ENCODE measurements at regions of chr17 and their contacts with region 1.

Region 1: GRCh38 chr17:48047741-48048383 is at the start of gene NFE2L1:
- DNase-seq: peak; percentile 99
- H3K4me3 ChIP-seq: peak within 1 kb of the TSS; percentile 78
- H3K27ac ChIP-seq: peak within 1 kb of the TSS; percentile 66
- H3K4me1 ChIP-seq: peaks cover 60% of the 10 kb centered on the region
- CTCF ChIP-seq: no peak
- total RNA-seq, gene NFE2L1: 42.3 and 60.1 TPM in 2 replicates

Region 2: DNA sequence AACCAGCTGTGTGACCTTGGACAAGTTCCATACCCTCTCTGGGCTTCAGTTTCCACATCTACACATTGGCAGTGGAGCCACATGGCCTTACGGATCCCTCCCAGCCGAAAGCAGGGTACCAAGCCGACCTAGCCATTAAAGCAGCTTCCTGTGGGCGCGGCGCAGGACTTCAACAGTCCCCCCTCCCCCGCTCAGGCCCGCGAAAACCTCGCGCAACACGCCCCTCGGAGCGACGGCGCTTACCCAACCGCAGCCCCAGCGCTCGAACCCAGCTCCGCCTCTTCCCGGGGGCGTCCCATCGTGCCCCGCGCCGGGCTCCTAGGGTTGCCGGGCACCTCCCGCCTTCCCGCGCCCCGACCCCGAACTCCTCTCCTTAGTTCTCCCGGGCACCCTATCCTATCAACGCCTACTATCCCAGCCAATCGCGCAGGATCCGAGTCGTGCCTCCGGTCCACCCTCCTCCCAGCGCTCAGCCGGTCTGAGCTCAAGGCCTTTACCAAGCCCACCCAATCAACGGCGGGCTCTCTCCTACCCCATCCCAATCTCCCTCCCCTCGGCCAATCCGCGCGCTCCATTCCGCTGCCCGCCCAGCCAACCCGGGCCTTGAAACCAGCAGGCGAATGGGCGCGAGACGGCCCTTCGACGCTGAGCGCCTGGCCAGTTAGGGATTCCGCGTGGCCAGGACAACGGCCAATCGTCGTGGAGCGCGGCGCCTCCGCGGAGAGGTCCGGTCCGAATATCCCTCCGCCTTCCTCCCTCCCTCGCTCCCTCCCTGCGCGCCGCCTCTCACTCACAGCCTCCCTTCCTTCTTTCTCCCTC is 398.5 kb before region 1 on chr17 and contains the start of gene KPNB1:
- CTCF ChIA-PET with region 1: no interaction called
- POLR2A ChIA-PET with region 1: no interaction called
- intact Hi-C with region 1: loop called (anchors 2 kb)
- DNase-seq: peak; percentile 99
- H3K4me3 ChIP-seq: peak within 1 kb of the TSS; percentile 81
- H3K27ac ChIP-seq: peak within 1 kb of the TSS; percentile 92
- H3K4me1 ChIP-seq: peaks cover 44% of the 10 kb centered on the region
- CTCF ChIP-seq: no peak
- total RNA-seq, gene KPNB1: 215 and 232 TPM in 2 replicates

Region 3: GRCh38 chr17:48107168-48108132 is 59.6 kb after region 1 on chr17 and contains the start of gene SNX11:
- CTCF ChIA-PET with region 1: interaction called, 4 read pairs
- POLR2A ChIA-PET with region 1: interaction called, 3 read pairs
- intact Hi-C with region 1: loop called (anchors 2 kb)
- DNase-seq: peak; percentile 86
- H3K4me3 ChIP-seq: peak within 1 kb of the TSS; percentile 94
- H3K27ac ChIP-seq: peak within 1 kb of the TSS; percentile 61
- H3K4me1 ChIP-seq: peaks cover 23% of the 10 kb centered on the region
- CTCF ChIP-seq: peak; percentile 48; the same call in 1 of the 2 replicates
- total RNA-seq, gene SNX11: 6.5 and 12.0 TPM in 2 replicates

Measured in OCI-LY7 (cell line).